Transverse colon (tissue), 4 donors: ENCODE measurements at regions of chr6 and their contacts with region 1.

Region 1: GRCh38 chr6:136103763-136104311 is 146.3 kb downstream of the MTFR2 start:
- DNase-seq: peak; percentile 10
- H3K4me3 ChIP-seq: no peak overlapping the region
- H3K27ac ChIP-seq: peak overlapping the region; percentile 65 to 85 (median 73)
- H3K4me1 ChIP-seq: peaks cover 0 to 19% (median 9%) of the 10 kb centered on the region in 4 donors
- H3K27me3 ChIP-seq: no peaks in the 10 kb centered on the region
- CTCF ChIP-seq: no peak
- EP300 ChIP-seq: no peak
- POLR2A ChIP-seq: no peak

Region 2: DNA sequence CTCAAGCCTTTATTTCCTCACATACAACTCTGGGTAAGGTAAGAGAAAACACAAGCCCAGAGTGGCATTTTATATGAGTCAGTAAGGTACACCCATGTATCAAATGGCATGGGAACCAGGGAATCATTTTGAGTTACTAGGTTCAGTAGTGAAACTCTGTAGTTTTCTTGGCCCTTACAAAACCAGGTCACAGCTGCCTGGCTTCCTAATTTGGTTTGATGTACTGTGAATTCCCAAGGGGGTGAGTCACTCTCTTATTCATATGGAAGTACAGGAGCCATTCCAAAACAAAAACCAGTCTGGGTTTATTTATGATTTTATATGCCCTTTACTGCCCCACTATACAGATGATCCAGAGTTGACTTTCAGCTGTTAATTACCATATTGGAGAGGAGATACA is 181.7 kb before region 1 on chr6:
- in situ Hi-C with region 1: no loop called
- intact Hi-C with region 1: loop called (anchors 2 kb)
- DNase-seq: no peak
- H3K4me3 ChIP-seq: no peak overlapping the region
- H3K27ac ChIP-seq: peak overlapping the region; percentile 9 to 62 (median 50)
- H3K4me1 ChIP-seq: peaks cover 0 to 13% (median 2%) of the 10 kb centered on the region in 4 donors
- H3K27me3 ChIP-seq: no peaks in the 10 kb centered on the region
- CTCF ChIP-seq: no peak
- EP300 ChIP-seq: no peak
- POLR2A ChIP-seq: no peak

Region 3: DNA sequence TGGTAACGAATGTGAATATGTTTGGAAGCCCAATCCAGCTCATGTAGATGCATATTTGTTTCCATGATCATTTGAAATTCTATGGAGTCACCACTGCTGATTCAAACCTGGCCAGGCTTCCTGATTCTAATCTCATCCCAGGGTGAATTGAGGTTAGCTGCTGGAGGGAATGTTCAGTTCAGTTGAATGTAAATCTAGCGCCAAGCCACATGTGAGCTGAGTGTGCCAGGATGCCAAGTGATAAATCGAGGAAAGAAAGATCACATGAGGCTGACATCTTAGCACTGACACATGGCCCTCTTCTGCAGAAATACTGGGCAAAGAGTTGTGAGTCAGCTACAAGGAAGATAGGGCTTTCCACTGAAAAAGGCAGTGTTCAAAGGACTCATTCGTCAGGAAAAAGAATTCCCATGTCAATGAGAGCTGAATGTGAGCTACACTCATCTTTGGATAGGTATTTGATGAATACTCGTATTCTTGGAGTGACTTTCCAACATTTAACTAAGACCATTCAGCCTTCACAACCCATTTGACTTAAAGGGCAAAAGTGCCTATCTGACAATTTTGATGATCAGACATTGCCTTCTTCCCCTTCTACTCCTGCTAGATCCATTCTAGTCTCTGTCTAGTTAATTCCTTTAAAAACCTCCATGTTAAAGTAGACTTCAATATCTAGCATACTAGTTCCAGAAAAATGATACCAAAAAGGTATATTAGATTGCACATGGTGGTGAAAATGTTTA is 25.8 kb before region 1 on chr6:
- in situ Hi-C with region 1: no loop called
- intact Hi-C with region 1: loop called (anchors 1 kb)
- DNase-seq: no peak
- H3K4me3 ChIP-seq: no peak overlapping the region
- H3K27ac ChIP-seq: no peak overlapping the region
- H3K4me1 ChIP-seq: no peaks in the 10 kb centered on the region
- H3K27me3 ChIP-seq: no peaks in the 10 kb centered on the region
- CTCF ChIP-seq: no peak
- EP300 ChIP-seq: no peak
- POLR2A ChIP-seq: no peak